BJ (cell line): ENCODE measurements at regions of chr19 and their contacts with region 1.

Region 1: DNA sequence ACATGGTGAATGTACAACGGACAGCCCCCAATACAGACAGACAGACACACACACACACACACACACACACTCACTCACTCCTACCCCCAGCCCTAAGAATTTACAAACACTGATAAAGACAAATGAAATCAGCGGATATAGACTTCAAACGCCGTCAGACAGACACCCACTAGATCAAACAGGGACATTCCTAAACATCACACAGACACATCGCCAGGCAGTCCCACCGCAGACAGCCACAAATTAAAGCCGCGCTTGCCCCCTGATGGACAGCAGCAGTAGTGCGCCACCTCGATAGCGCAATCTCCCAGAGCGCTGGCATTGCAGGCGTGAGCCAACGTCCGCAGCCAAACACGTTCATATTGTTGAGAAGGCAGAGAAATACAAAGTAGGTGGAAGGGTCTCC is 24.7 kb upstream of the ADGRE1 start:
- DNase-seq: peak; percentile 4
- H3K4me3 ChIP-seq: peak overlapping the region; percentile 26
- H3K27me3 ChIP-seq: no peaks in the 10 kb centered on the region
- CTCF ChIP-seq: peak; percentile 88

Region 2: GRCh38 chr19:6516659-6517291 is 345.9 kb before region 1 on chr19:
- CTCF ChIA-PET with region 1: interaction called, 22 read pairs
- POLR2A ChIA-PET with region 1: no interaction called
- DNase-seq: no peak
- H3K4me3 ChIP-seq: peak overlapping the region; percentile 61
- H3K27me3 ChIP-seq: no peaks in the 10 kb centered on the region
- CTCF ChIP-seq: peak; percentile 99

Region 3: DNA sequence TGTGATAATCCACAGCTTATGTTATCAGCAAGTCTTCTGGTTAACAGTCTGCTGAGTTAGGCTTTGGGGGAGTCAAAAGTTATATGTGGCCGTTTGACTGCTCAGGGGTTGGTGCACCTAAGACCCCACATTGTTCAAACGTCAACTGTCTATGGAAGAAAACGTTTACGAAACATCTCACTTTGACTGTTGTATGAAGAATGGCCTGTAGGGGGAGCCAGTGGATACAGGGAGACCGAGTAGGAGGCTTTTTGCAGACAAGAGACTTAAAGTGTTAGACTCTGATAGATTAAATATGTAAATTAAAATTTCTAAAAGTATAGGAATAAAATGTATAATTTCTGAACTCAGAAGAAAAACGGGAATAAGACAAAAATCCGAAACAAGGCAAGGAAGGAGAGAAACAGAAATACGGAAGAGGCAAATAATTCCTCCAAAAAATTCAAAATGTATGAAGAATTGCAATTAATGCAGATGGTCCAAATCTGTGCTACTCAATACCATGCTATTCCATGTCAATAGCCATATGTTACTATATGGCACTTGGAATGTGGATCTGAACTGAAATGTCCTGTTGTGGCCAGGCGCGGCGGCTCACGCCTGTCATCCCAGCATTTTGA is 230.6 kb before region 1 on chr19:
- CTCF ChIA-PET with region 1: interaction called, 43 read pairs
- POLR2A ChIA-PET with region 1: no interaction called
- DNase-seq: no peak
- H3K4me3 ChIP-seq: no peak overlapping the region
- H3K27me3 ChIP-seq: no peaks in the 10 kb centered on the region
- CTCF ChIP-seq: peak; percentile 88

Region 4: GRCh38 chr19:6639439-6639838 is 223.2 kb before region 1 on chr19:
- CTCF ChIA-PET with region 1: interaction called, 10 read pairs
- POLR2A ChIA-PET with region 1: no interaction called
- DNase-seq: no peak
- H3K4me3 ChIP-seq: no peak overlapping the region
- H3K27me3 ChIP-seq: no peaks in the 10 kb centered on the region
- CTCF ChIP-seq: no peak

Region 5: DNA sequence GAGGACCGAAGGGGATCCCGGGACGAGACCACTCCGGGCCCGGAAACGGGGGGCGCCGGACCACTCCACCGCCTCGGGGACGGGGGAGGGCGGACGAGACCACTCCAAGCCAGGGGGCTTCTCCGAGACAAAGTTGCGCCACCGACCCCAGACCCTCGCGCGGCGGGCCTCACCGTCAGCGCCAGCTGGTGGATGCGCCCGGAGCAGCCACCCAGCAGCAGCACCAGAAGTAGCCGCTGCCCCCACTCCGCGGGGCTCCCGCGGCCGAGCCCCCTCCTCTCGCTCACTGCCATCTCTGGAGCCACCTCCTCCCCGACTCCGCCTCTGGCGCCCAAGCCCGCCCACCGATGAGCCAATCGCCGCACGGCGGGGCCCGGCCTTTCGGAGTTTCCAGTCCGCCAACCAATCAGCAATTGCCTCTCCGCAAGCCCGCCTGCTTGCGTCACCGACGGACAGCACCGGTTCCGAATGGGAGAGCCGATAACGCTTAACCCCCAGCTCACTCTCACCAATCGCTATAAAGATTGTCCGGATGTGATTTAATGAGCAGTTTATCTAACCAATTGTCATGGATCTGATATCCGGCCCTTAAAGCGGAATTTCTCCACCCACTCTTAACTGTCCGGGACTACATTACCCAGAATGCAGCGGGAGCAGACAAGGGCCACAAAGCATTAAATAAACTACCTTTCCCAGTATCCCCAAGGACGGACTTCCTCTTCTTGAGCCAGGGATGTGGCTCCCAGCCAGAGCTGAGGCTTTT is 125.2 kb before region 1 on chr19 and contains the start of gene GPR108:
- CTCF ChIA-PET with region 1: interaction called, 51 read pairs
- POLR2A ChIA-PET with region 1: no interaction called
- DNase-seq: peak; percentile 100
- H3K4me3 ChIP-seq: peak within 1 kb of the TSS; percentile 84
- H3K27me3 ChIP-seq: no peaks in the 10 kb centered on the region
- CTCF ChIP-seq: no peak
- polyA plus RNA-seq, gene GPR108: 56.1 and 71.4 TPM in 2 replicates